Mammary epithelial cell (primary cell): ENCODE measurements at regions of chr12 and their contacts with region 1.

Region 1: GRCh38 chr12:121296618-121297434 is at the start of gene CAMKK2:
- DNase-seq: peak; percentile 79
- H3K4me3 ChIP-seq: peak within 1 kb of the TSS; percentile 91 to 98 (median 95)
- H3K27ac ChIP-seq: peak within 1 kb of the TSS; percentile 69
- H3K4me1 ChIP-seq: peaks cover 14% of the 10 kb centered on the region
- H3K27me3 ChIP-seq: no peaks in the 10 kb centered on the region
- CTCF ChIP-seq: peak in 1 of 2 donors; percentile 36
- total RNA-seq, gene CAMKK2: 24.8 to 26.0 TPM

Region 2: GRCh38 chr12:121277374-121277759 is 19.5 kb before region 1 on chr12:
- CTCF ChIA-PET with region 1: no interaction called
- dilution Hi-C with region 1: no loop called
- in situ Hi-C with region 1: no loop called
- intact Hi-C with region 1: loop called (anchors 2 kb)
- DNase-seq: no peak
- H3K4me3 ChIP-seq: no peak overlapping the region
- H3K27ac ChIP-seq: peak overlapping the region; percentile 47
- H3K4me1 ChIP-seq: peaks cover 17% of the 10 kb centered on the region
- H3K27me3 ChIP-seq: no peaks in the 10 kb centered on the region
- CTCF ChIP-seq: no peak